ENCODE measurements at regions of chr6 and their contacts with region 1.

Region 1: DNA sequence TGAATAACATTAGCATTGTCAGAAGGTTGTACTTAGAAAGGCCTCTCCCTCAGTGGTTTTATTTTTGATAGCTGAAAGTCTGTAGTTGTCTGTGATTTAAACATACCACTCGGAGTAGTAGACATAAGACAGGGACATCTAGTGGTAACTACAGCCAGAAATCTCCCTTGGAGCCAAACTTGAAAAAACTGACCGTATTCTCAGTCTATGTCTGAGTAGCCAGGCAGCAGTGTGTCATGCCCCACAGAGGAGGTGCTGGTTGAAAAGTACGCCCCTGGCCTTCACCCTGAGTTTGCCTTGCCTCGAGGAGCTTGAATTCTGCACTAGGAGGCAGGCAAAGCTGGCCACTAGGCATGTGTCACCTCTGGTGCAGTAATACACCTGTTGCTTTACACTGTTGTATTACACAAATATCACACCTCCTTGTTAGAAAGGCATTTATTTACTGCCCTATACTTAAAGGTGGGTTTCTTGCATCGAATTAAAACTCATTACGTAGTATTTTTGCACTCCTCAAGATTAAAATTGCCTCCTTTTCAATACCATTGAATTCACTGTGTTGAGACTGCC is 20.8 kb downstream of the ZBTB2 start:
- DNase-seq: no peak
- ATAC-seq: no peak
- H3K4me3 ChIP-seq: no peak overlapping the region
- H3K4me3 Mint-ChIP-seq: peak overlapping the region in 1 of 3 donors; percentile 60
- H3K27ac ChIP-seq: no peak overlapping the region
- H3K27ac Mint-ChIP-seq: no peak overlapping the region
- H3K4me1 ChIP-seq: peaks cover 22 to 40% of the 10 kb centered on the region in 2 experiments
- H3K4me1 Mint-ChIP-seq: peaks cover 42 to 47% (median 43%) of the 10 kb centered on the region in 3 donors
- H3K27me3 ChIP-seq: no peaks in the 10 kb centered on the region
- H3K27me3 Mint-ChIP-seq: no peaks in the 10 kb centered on the region

Region 2: DNA sequence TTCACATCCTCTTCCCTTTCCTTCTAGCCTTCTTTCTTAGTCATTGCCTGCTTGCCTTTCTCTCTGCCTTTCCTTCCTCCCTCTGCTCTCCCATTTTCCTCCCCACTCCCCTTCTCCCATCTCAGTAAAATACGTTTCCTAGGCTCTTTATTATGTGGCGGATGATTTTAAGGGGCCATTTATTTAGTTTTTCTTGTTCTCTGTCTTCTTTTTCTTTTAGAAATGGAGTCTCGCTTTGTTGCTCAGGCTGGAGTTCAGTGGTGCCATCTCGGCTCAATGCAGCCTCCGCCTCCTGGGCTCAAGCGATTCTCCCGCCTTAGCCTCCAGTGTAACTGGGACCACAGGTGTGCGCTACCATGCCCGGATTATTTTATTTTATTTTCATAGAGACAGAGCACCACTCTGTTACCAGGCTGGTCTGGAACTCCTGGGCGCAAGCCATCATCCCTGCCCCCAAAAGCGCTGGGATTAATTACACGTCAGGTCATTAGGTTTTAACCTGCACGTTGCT is 503.5 kb before region 1 on chr6:
- CTCF ChIA-PET with region 1: no interaction called
- POLR2A ChIA-PET with region 1: interaction called in 1 of 2 experiments, 14 read pairs
- DNase-seq: no peak
- ATAC-seq: no peak
- H3K4me3 ChIP-seq: peak overlapping the region; percentile 57 to 71
- H3K4me3 Mint-ChIP-seq: peak overlapping the region; percentile 86 to 92 (median 86)
- H3K27ac ChIP-seq: no peak overlapping the region
- H3K27ac Mint-ChIP-seq: peak overlapping the region; percentile 50 to 64
- H3K4me1 ChIP-seq: peaks cover 5 to 11% of the 10 kb centered on the region in 2 experiments
- H3K4me1 Mint-ChIP-seq: peaks cover 12 to 13% (median 13%) of the 10 kb centered on the region in 3 donors
- H3K27me3 ChIP-seq: peaks cover 0 to 5% of the 10 kb centered on the region in 2 experiments
- H3K27me3 Mint-ChIP-seq: peaks cover 9% of the 10 kb centered on the region in 2 donors

Region 3: DNA sequence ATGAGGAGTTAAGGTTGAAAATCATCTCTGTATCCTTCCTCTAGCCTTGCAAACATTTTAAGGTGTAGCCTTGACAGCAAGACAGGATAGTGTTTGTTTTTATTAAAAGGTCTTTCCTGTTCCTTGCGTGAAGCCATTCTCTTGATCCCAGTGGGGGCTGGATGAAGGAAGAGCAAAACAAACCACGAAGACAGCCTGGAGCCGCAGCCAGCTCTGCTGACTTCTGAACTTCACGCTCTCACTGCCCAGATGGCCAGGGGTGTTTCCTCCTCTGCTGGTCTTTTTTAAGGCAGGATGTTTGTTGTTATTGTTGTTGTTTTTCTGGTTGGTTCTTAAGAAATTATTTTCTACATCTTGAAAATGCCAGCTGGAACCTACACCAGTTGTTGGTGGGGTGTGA is 348.7 kb before region 1 on chr6:
- CTCF ChIA-PET with region 1: no interaction called
- POLR2A ChIA-PET with region 1: no interaction called
- DNase-seq: no peak
- ATAC-seq: no peak
- H3K4me3 ChIP-seq: no peak overlapping the region
- H3K4me3 Mint-ChIP-seq: no peak overlapping the region
- H3K27ac ChIP-seq: no peak overlapping the region
- H3K27ac Mint-ChIP-seq: no peak overlapping the region
- H3K4me1 ChIP-seq: no peaks in the 10 kb centered on the region
- H3K4me1 Mint-ChIP-seq: no peaks in the 10 kb centered on the region
- H3K27me3 ChIP-seq: no peaks in the 10 kb centered on the region
- H3K27me3 Mint-ChIP-seq: no peaks in the 10 kb centered on the region

Region 4: DNA sequence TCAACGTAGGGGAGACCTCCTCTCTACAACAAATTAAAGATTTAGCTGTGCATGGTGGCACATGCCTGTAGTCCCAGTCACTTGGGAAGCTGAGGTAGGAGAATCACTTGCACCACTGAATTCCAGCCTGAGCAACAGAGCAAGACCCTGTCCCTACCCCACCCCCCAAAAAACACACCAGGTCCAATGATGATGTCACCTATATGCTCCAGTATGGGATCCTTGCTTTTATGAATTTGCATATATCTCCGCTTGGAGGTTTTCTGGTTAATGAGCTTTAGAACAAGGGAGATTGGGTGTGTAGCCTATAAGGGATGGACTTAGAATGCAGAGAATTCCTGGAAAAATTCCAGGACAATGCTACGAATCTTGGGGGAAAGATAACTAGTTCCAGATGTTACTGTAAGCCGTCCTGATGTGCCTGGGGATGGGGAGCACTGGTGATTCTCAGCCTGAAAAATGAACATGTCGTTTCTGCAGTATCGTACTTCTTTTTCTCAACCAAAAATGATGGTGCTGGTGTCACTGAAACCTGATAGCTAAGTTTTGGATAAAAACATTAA is 40.4 kb before region 1 on chr6:
- CTCF ChIA-PET with region 1: interaction called, 3 to 6 read pairs
- POLR2A ChIA-PET with region 1: interaction called in 1 of 2 experiments, 13 read pairs
- DNase-seq: no peak
- ATAC-seq: no peak
- H3K4me3 ChIP-seq: no peak overlapping the region
- H3K4me3 Mint-ChIP-seq: no peak overlapping the region
- H3K27ac ChIP-seq: no peak overlapping the region
- H3K27ac Mint-ChIP-seq: no peak overlapping the region
- H3K4me1 ChIP-seq: peaks cover under 1 to 12% of the 10 kb centered on the region in 2 experiments
- H3K4me1 Mint-ChIP-seq: peaks cover 9 to 12% (median 11%) of the 10 kb centered on the region in 3 donors
- H3K27me3 ChIP-seq: peaks cover 2 to 18% of the 10 kb centered on the region in 2 experiments
- H3K27me3 Mint-ChIP-seq: peaks cover 32 to 33% of the 10 kb centered on the region in 2 donors

Region 5: GRCh38 chr6:151357758-151358436 is 12.7 kb before region 1 on chr6:
- CTCF ChIA-PET with region 1: interaction called in 1 of 2 experiments, 3 read pairs
- POLR2A ChIA-PET with region 1: interaction called in 1 of 2 experiments, 10 read pairs
- DNase-seq: no peak
- ATAC-seq: no peak
- H3K4me3 ChIP-seq: no peak overlapping the region
- H3K4me3 Mint-ChIP-seq: no peak overlapping the region
- H3K27ac ChIP-seq: no peak overlapping the region
- H3K27ac Mint-ChIP-seq: peak overlapping the region in 1 of 2 donors; percentile 42
- H3K4me1 ChIP-seq: peaks cover 3 to 4% of the 10 kb centered on the region in 2 experiments
- H3K4me1 Mint-ChIP-seq: peaks cover 10 to 14% (median 12%) of the 10 kb centered on the region in 3 donors
- H3K27me3 ChIP-seq: no peaks in the 10 kb centered on the region
- H3K27me3 Mint-ChIP-seq: no peaks in the 10 kb centered on the region

Region 6: DNA sequence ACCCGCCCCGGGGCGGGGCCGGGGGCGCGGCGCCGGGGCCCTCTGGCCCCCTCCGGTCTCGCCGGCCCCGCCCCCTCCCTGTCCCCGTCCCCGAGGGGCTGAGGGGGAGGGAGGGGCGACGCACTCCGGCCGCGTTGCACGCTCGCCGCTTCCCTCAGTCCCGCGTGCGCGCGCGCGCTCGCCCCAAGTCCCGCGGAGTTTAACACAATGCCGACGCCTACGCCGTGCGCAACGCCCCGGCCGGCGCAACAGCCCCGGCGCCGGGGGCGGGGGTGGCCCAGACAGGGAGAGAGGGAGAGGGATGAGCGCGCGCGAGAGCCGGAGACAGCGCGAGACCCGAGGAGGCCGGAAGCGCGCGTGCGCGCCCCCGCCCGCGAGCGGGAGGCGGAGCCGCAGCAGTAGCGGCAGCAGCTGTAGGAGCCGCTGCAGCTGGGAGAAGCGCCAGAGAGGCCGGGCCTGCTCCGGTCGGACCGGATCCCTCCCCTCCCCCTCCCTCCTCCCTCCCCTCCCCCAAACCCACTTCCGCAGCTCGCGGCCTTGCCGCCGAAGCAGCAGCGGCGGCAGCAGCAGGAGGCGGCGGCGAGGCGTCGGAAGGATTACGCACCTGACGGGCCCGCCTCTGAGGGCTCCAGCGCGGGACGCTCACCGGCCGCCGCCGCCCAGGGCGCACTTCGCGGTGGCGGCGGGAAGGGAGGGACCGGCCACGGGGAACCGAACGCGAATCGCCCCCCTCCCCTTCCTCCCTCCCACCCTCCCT is 19.9 kb after region 1 on chr6:
- CTCF ChIA-PET with region 1: interaction called, 3 to 12 read pairs
- POLR2A ChIA-PET with region 1: interaction called, 4 to 28 read pairs
- DNase-seq: peak; percentile 96 to 100 (median 98)
- ATAC-seq: peak; percentile 79 to 83 (median 80)
- H3K4me3 ChIP-seq: peak overlapping the region in 1 of 2 donors; percentile 88
- H3K4me3 Mint-ChIP-seq: peak overlapping the region; percentile 69 to 92 (median 73)
- H3K27ac ChIP-seq: peak overlapping the region; percentile 81
- H3K27ac Mint-ChIP-seq: peak overlapping the region; percentile 59 to 68
- H3K4me1 ChIP-seq: peaks cover 35 to 40% of the 10 kb centered on the region in 2 experiments
- H3K4me1 Mint-ChIP-seq: peaks cover 54 to 68% (median 63%) of the 10 kb centered on the region in 3 donors
- H3K27me3 ChIP-seq: no peaks in the 10 kb centered on the region
- H3K27me3 Mint-ChIP-seq: no peaks in the 10 kb centered on the region

Measured in T-cell (primary cell).